Activated naive CD8-positive, alpha-beta T cell treated with anti-CD3 and anti-CD28 coated beads, Interleukin-2, amount 10 ng/mL, durations not matched to agents 7 days and 5 days (primary cell): ENCODE measurements at regions of chr15 and their contacts with region 1.

Region 1: DNA sequence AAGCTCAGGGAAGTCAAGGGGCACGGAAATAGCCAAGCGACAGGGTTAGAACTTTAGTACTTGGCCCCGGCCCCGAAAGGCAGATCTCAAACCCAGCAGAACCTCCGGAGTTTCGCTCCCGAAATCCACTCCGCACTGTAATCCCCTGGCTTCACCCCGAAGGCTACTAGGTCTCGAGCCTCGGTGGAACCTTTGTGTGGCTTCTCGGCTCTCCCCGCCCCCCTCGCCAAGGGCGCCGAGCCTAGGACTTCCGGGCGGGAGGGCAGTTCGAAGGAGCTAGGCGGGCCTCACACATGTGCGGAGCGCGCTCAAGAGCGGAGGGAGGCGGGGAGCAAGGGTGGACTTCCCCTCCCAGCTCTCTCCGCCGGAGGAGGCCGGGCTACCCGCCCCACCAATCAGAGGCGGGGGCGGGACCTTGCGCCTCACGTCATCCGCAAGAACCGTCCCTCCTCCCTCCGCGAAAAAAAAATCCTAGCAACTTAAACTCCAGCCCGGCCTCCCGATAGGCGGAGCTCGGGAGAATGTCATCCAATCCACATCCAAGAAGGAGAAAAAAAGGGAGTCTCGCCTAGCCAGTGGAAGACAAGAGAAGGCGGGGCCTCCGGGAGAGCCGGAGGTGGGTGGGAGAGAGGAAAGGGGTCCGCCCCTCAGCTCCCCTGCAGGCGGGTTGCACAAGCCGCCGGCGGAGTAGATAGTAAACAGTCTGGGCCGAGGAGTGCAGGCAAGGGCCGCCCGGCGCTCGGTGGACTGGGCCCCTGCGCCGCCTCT is 2.4 kb upstream of the SIN3A start:
- DNase-seq: peak; percentile 95
- ATAC-seq: peak; percentile 38
- H3K4me3 Mint-ChIP-seq: peak overlapping the region; percentile 95
- H3K27ac Mint-ChIP-seq: peak overlapping the region; percentile 99
- H3K4me1 Mint-ChIP-seq: peaks cover 21% of the 10 kb centered on the region
- H3K27me3 Mint-ChIP-seq: no peaks in the 10 kb centered on the region

Region 2: GRCh38 chr15:75091814-75092213 is 362.1 kb before region 1 on chr15:
- POLR2A ChIA-PET with region 1: no interaction called
- DNase-seq: no peak
- ATAC-seq: no peak
- H3K4me3 Mint-ChIP-seq: no peak overlapping the region
- H3K27ac Mint-ChIP-seq: no peak overlapping the region
- H3K4me1 Mint-ChIP-seq: peaks cover 1% of the 10 kb centered on the region
- H3K27me3 Mint-ChIP-seq: peaks cover 1% of the 10 kb centered on the region

Region 3: GRCh38 chr15:75367913-75368688 is 85.8 kb before region 1 on chr15 and contains the start of gene MAN2C1:
- POLR2A ChIA-PET with region 1: interaction called, 110 read pairs
- DNase-seq: peak; percentile 94
- ATAC-seq: peak; percentile 91
- H3K4me3 Mint-ChIP-seq: peak within 1 kb of the TSS; percentile 89
- H3K27ac Mint-ChIP-seq: peak within 1 kb of the TSS; percentile 91
- H3K4me1 Mint-ChIP-seq: peaks cover 22% of the 10 kb centered on the region
- H3K27me3 Mint-ChIP-seq: no peaks in the 10 kb centered on the region
- total RNA-seq, gene MAN2C1: 232 to 235 TPM

Region 4: DNA sequence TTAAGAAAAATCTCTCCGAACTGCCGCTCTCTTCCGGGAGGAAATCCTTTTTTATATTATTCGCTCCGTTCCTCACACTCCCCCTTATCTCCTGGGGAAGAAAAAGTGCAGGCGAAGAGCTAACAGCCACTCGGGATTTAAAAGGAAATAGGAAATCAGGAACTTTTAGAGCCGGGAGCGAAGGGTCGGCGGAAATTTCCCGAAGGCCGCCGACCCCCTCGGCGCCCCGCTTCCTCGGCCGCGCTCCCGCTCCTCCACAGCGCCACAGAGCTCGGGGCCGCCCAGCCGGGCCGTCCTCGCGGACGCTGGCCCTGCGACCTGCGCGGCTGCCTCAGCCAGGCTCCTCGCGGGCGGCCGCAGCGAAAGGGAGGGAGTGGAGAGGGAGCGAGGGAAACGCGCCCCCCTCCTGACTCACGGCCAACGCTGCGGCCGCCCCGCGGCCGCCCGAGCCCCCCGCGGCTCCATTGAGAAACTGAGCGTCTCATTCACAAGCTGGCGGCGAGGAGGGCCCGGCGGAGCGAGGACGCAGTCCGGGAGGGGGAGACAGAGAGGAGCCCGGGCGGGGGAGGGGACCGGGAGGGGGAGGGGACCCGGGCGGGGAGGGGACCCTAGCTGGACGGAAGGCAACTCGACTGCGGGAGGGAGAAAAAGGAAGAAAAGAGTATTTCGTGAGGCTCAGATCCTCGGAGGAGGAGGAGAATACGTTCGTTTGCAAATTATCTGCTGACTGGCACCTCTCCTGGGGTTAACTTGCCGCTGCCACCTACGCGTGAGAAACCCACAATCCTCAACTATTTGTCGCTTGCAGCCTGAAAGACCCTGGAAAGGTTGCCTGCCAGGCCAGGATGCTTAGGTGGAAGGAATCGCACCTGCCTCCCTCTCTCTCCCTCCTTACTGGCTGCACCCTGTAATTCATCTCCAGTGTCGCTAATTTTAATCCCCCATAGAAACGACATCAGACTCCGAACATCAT is 125.3 kb after region 1 on chr15 and contains the start of gene PTPN9:
- POLR2A ChIA-PET with region 1: interaction called, 35 read pairs
- DNase-seq: peak; percentile 78
- ATAC-seq: peak; percentile 83
- H3K4me3 Mint-ChIP-seq: peak within 1 kb of the TSS; percentile 94
- H3K27ac Mint-ChIP-seq: peak within 1 kb of the TSS; percentile 90
- H3K4me1 Mint-ChIP-seq: peaks cover 18% of the 10 kb centered on the region
- H3K27me3 Mint-ChIP-seq: no peaks in the 10 kb centered on the region
- total RNA-seq, gene PTPN9: 35.8 to 37.5 TPM

Region 5: GRCh38 chr15:75597667-75598341 is 143.9 kb after region 1 on chr15:
- POLR2A ChIA-PET with region 1: interaction called, 29 read pairs
- DNase-seq: peak; percentile 47
- ATAC-seq: peak; percentile 89
- H3K4me3 Mint-ChIP-seq: peak overlapping the region; percentile 76
- H3K27ac Mint-ChIP-seq: peak overlapping the region; percentile 92
- H3K4me1 Mint-ChIP-seq: peaks cover 34% of the 10 kb centered on the region
- H3K27me3 Mint-ChIP-seq: no peaks in the 10 kb centered on the region

Region 6: DNA sequence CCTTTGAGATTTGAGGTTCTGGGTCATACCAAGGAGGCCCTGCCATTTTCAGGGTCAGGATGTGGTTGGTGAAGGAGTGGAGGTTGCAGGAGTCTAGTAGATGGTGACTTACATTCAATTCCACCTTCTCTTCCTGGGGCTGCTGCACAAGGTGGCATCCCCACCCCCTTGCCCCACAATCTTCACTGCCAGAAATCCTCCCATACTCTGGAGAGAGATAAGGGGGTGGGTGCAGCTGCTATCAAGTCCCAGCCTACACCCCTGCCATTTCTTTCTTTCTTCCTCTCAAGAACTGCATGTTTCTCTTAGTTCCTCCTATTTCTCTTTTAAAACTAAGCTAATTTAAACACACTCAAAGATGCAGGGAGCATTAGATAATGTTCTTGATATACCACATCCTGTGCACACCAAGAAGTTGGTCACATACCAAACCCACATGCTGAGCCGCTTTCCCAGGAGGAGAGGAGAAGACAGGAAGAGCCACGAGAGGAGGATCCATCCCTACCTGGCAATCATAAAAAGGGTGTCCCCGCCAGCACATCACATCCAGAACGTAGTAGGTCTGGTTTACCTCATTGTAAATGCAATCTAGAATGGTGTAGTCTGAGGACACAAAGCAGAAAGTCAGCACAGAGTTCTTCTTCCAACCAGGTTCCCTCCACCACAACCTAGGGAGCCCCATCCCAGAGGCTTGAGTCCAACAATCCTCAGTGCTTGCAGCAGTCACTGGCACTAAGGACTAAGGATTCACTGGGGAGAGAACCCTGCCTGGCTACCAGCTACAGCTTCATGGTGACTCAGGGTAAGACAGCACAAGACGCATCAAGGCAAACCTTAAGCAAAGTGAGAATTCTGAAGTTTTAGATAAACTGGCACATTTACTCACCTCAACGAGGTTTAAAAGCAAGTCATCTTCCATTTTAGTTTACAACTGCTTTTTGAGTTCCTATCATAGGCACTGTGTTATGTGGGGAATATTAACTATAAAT is 153.1 kb after region 1 on chr15:
- POLR2A ChIA-PET with region 1: interaction called, 27 read pairs
- DNase-seq: peak; percentile 54
- ATAC-seq: peak; percentile 90
- H3K4me3 Mint-ChIP-seq: peak overlapping the region; percentile 84
- H3K27ac Mint-ChIP-seq: peak overlapping the region; percentile 98
- H3K4me1 Mint-ChIP-seq: peaks cover 42% of the 10 kb centered on the region
- H3K27me3 Mint-ChIP-seq: no peaks in the 10 kb centered on the region

Region 7: GRCh38 chr15:75625542-75626347 is 171.9 kb after region 1 on chr15 and contains the start of gene SNUPN:
- POLR2A ChIA-PET with region 1: interaction called, 90 read pairs
- DNase-seq: peak; percentile 91
- ATAC-seq: peak; percentile 83
- H3K4me3 Mint-ChIP-seq: peak within 1 kb of the TSS; percentile 88
- H3K27ac Mint-ChIP-seq: peak within 1 kb of the TSS; percentile 92
- H3K4me1 Mint-ChIP-seq: peaks cover 27% of the 10 kb centered on the region
- H3K27me3 Mint-ChIP-seq: no peaks in the 10 kb centered on the region
- total RNA-seq, gene SNUPN: 27.1 to 30.4 TPM

Region 8: GRCh38 chr15:75647370-75648155 is 193.7 kb after region 1 on chr15 and contains the start of gene SNX33:
- POLR2A ChIA-PET with region 1: interaction called, 168 read pairs
- DNase-seq: peak; percentile 69
- ATAC-seq: peak; percentile 65
- H3K4me3 Mint-ChIP-seq: peak within 1 kb of the TSS; percentile 86
- H3K27ac Mint-ChIP-seq: peak within 1 kb of the TSS; percentile 72
- H3K4me1 Mint-ChIP-seq: peaks cover 12% of the 10 kb centered on the region
- H3K27me3 Mint-ChIP-seq: peaks cover 17% of the 10 kb centered on the region
- total RNA-seq, gene SNX33: 2.1 to 2.6 TPM